Right ventricle myocardium inferior (tissue), 1 donor: ENCODE measurements at regions of chr3 and their contacts with region 1.

Region 1: GRCh38 chr3:119891944-119892721 is 110.2 kb downstream of the NR1I2 start:
- DNase-seq: no peak
- ATAC-seq: peak; percentile 85

Region 2: GRCh38 chr3:120147072-120147871 is 255.1 kb after region 1 on chr3:
- intact Hi-C with region 1: loop called (anchors 5 kb)
- DNase-seq: no peak
- ATAC-seq: peak; percentile 32

Region 3: DNA sequence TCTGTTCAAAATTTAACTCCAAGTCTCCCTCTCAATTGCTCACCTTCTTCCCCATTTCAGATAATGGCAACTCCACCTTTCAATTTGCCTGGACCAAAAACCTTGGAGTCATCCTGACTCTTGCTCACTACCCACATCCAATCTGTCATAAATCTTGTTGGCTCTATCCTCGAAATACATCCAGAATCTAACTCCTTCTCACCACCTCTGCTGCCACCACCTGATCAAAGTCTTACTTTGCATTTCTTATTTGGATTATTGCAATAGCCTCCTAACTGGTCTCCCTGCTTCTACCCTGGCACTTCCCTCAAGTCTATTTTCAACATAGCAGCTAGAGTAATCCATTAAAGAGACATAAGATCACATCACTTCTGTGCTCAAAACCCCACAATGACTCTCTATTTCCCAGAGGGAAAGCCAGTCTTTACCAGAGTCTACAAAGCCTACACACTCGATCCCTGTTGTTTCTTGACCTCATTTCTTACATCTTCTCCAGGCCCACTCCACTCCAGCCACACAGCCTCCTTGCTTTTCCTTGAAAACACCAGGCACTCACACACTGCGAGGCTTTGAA is 306.3 kb after region 1 on chr3:
- intact Hi-C with region 1: loop called (anchors 2 kb)
- DNase-seq: no peak
- ATAC-seq: no peak